Esophagus muscularis mucosa (tissue), 4 donors: ENCODE measurements at regions of chr15 and their contacts with region 1.

Region 1: DNA sequence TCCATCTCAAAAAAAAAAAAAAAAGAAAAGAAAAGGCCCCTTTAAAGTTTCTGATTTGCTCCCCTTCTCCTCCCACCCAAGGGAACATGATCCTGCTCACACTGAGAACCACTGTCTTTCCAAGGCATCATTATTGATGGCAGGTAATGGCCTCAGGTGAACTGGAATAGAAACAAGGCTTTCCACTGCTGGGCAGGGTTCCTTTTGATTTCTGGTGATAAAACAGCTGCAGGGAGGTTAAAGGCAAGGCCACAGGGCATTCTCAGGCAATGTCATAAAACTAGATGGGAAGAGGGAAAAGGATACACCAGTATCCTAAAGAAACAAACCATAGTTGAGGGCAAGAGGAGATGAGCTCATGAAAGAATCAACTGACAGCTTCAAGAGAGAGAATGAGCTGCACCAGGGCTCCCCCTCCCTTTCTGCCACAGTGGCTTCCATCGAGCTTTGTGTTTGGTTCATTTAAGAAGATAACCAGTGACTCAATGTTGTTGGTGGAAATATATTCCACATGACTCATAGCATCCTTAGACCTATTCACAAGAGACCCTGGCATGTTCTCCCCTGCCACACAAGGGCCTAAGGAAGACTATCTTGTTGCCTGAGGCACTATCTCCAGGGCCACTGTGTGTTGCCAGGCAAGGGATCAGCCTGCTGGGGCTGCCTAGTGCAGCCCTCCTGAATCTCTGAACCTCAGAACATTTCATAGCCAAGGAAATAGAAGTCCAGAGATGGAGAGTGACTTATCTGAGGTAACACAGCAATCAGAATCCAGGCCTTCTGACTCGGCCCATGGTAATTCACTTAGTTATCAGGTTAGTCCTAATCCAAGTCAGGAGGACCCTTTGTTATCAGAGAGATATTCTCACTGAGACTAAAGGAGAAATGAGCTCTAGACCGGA is 86.5 kb downstream of the WDR76 start:
- DNase-seq: no peak
- H3K4me3 ChIP-seq: no peak overlapping the region
- H3K27ac ChIP-seq: no peak overlapping the region
- H3K4me1 ChIP-seq: peaks cover 0 to 20% (median 7%) of the 10 kb centered on the region in 4 donors
- H3K27me3 ChIP-seq: no peaks in the 10 kb centered on the region
- CTCF ChIP-seq: no peak
- EP300 ChIP-seq: no peak
- POLR2A ChIP-seq: no peak

Region 2: DNA sequence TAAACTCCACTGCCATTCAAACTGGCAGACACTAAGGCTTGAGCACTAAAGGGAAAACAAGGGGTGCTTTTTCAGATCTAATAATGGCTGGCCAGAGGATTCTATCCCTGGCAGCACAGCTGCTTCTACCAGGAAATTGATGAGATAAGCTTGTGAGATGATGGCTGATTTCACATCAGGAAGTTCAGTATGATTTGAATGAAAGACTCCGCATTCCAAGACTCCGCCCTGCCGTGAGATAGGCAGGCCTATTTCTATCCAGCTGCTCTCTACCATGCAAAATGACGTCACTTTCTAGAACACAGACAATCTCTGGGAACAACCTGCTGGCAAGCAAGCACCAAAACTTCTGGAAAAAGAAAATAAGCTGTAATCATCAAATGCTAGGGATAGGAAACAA is 85.3 kb after region 1 on chr15:
- intact Hi-C with region 1: loop called (anchors 10 kb)
- DNase-seq: peak; percentile 80
- H3K4me3 ChIP-seq: peak overlapping the region in 2 of 4 donors; percentile 4 to 5
- H3K27ac ChIP-seq: peak overlapping the region in 1 of 4 donors; percentile 3
- H3K4me1 ChIP-seq: peaks cover 0 to 7% (median 2%) of the 10 kb centered on the region in 4 donors
- H3K27me3 ChIP-seq: no peaks in the 10 kb centered on the region
- CTCF ChIP-seq: no peak
- EP300 ChIP-seq: no peak
- POLR2A ChIP-seq: no peak